ENCODE measurements at regions of chr22 and their contacts with region 1.

Region 1: DNA sequence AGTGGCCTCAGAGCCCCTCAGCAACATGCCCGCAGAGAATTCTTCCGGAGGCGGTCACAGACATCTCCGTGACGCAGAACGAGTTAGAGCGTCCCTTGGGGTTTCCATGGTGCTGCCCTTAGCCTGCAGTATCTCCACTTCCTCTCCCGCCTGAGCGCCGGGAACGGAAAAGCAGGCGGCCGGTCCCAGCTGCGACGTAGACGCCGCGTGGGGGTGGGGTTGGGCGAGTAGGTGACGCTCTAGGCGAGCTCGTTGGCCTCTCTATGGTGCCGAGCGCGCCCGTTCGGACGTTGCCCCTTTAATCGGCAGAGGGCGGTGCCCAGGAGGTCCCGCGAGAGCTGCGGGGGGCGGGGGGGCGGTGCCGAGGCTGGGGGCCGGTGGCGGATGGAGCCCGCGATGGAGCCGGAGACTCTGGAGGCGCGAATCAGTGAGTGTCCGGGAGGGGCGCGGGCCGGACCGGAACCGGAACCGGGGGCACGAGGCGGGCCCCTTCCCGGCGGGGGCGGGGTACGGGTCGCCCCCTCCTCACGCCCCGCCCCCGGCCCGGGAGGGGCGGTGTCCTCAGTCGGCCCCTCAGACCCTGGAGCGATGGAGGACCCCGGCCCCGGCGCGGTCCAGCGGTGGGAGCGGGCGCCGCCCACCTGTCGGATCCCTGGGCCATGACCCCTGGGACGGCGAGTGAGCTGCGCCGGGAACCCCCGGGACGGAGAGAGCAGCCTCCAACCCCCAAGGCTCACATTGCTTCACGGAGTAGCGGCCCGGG is at the start of gene GGA1:
- DNase-seq: peak; percentile 92 to 97 (median 96)
- H3K4me3 ChIP-seq: peak within 1 kb of the TSS; percentile 70 to 99 (median 93)
- H3K27ac ChIP-seq: peak within 1 kb of the TSS; percentile 85 to 99 (median 96)
- H3K27me3 ChIP-seq: no peaks in the 10 kb centered on the region
- CTCF ChIP-seq: peak in 35 of 56 donors; percentile 2 to 59 (median 30)
- total RNA-seq, gene GGA1: 45.6 to 94.6 (median 65.5) TPM

Region 2: GRCh38 chr22:37544955-37545699 is 63.5 kb before region 1 on chr22:
- intact Hi-C with region 1: loop called in 1 of 2 experiments (anchors 5 kb)
- DNase-seq: peak in 4 of 10 donors; percentile 49 to 73 (median 62)
- H3K4me3 ChIP-seq: peak overlapping the region in 10 of 59 donors; percentile 3 to 26 (median 16)
- H3K27ac ChIP-seq: peak overlapping the region; percentile 60 to 98 (median 95)
- H3K27me3 ChIP-seq: peaks cover 0 to 6% (median 0%) of the 10 kb centered on the region in 45 donors
- CTCF ChIP-seq: peak; percentile 12 to 79 (median 62)

Region 3: DNA sequence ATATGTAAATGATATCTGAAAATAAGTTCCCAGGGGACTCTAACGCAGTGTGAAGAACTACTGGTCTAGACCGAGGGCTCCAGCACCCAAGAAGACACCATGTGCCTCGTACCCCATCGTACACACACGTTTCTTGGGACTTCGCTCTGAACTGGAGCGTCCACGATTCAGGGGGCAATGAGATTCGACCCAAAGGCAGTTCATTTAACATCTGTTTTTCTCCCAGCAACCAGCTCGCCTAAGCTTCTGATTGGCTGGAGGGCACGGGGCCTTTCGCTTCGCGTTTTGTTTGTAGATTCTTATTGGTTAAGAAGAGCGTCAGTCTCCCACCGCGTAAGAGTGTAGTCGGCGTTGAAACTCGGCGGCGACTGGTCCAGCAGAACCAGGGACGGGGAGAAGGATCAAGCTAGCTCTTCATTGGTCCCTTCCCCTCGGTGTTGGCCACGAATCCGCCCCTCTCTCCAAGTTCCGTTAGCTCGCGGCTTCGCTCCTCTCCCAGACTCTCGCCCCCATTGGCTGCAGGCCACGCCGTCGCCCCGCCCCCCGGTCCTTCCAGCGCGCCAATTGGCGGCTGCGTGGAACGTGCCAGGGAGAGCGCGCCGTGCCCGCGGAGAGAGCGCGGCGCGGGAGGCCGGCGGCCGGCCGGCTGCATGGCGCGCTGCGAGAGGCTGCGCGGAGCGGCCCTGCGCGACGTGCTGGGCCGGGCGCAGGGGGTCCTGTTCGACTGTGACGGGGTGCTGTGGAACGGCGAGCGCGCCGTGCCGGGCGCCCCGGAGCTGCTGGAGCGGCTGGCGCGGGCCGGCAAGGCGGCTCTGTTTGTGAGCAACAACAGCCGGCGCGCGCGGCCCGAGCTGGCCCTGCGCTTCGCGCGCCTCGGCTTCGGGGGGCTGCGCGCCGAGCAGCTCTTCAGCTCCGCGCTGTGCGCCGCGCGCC is 49.7 kb after region 1 on chr22 and contains the start of gene PDXP:
- intact Hi-C with region 1: loop called in 1 of 2 experiments (anchors 2 kb)
- DNase-seq: peak; percentile 91 to 99 (median 98)
- H3K4me3 ChIP-seq: peak within 1 kb of the TSS; percentile 49 to 82 (median 71)
- H3K27ac ChIP-seq: peak within 1 kb of the TSS in 56 of 59 donors; percentile 20 to 92 (median 79)
- H3K27me3 ChIP-seq: no peaks in the 10 kb centered on the region
- CTCF ChIP-seq: peak in 10 of 56 donors; percentile 7 to 50 (median 23)
- total RNA-seq, gene PDXP: 62.4 to 280 (median 189) TPM

Region 4: DNA sequence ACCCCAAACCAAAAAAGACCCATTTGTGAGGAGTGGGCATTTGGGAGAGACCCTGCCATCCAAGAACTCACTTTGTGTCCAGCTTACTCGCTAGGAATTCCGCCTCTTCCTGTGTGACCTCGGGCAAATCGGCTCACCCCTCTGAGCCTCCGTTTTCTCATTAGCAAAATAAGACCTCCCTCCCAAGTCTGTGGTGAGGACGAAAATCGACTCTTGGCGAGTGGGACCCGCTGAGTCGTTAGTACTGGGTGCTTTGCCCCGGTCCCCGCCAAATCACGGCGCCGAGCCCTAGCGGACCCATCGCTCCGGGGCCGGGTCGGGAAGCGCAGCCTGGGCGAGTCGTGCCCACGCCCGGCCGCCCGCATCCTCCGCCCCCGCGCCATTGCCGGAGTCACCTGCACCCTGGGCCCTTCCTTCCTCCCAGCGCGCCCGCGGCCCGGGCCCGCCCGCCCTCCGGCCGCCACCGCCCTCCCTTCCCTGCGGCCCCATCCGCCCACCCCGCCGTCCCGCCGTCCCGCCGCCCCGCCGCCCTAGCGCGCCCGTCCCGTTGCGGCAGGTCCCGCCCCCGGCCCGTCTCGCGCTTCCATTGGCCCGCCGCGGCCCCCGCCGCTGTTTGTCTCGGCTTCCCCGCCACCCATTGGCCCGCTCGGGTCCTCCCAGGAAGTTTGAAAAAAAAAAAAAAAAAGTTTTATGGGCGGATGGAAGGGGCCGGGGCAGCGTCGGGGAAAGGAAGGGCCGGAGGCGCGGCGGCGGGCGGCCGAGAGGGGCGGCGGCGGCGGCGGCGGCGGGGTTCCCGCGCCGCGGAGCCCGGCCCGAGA is 137.1 kb after region 1 on chr22:
- intact Hi-C with region 1: loop called in 1 of 2 experiments (anchors 5 kb)
- DNase-seq: peak; percentile 78 to 89 (median 87)
- H3K4me3 ChIP-seq: peak overlapping the region; percentile 58 to 91 (median 80)
- H3K27ac ChIP-seq: peak overlapping the region in 40 of 59 donors; percentile 8 to 90 (median 68)
- H3K27me3 ChIP-seq: peaks cover 0 to 5% (median 0%) of the 10 kb centered on the region in 45 donors
- CTCF ChIP-seq: no peak

Measured in dorsolateral prefrontal cortex (tissue), 120 donors.